ENCODE measurements at regions of chr1 and their contacts with region 1.

Region 1: DNA sequence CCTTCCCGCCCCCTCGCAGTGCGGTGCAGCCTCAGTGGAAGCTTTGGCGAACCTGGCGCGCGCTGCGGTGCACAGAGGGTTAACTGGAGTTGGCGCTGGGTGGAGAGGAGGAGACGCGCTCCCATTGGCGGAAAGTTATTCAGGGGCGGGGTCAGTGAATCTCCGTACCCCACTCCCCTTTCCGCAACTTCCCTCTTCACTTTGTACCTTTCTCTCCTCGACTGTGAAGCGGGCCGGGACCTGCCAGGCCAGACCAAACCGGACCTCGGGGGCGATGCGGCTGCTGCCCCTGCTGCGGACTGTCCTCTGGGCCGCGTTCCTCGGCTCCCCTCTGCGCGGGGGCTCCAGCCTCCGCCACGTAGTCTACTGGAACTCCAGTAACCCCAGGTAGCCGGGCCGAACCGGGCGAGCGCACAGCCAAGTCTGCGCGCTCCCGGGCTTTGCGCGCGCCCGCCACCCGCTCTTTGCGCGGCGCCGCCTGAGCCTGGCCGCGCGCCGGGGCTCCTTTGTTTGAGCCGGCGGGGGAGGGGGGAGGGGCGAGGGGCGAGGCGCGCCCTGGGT is at the start of gene EFNA4:
- DNase-seq: peak; percentile 49
- H3K4me3 ChIP-seq: peak within 1 kb of the TSS; percentile 46 to 93 (median 73)
- H3K27ac ChIP-seq: peak within 1 kb of the TSS; percentile 84 to 92 (median 91)
- H3K4me1 ChIP-seq: peaks cover 31 to 48% (median 33%) of the 10 kb centered on the region in 3 donors
- H3K27me3 ChIP-seq: no peaks in the 10 kb centered on the region
- CTCF ChIP-seq: no peak
- POLR2A ChIP-seq: peak in 2 of 4 donors; percentile 59 to 68
- total RNA-seq, gene EFNA4: 8.1 to 22.9 (median 12.2) TPM

Region 2: DNA sequence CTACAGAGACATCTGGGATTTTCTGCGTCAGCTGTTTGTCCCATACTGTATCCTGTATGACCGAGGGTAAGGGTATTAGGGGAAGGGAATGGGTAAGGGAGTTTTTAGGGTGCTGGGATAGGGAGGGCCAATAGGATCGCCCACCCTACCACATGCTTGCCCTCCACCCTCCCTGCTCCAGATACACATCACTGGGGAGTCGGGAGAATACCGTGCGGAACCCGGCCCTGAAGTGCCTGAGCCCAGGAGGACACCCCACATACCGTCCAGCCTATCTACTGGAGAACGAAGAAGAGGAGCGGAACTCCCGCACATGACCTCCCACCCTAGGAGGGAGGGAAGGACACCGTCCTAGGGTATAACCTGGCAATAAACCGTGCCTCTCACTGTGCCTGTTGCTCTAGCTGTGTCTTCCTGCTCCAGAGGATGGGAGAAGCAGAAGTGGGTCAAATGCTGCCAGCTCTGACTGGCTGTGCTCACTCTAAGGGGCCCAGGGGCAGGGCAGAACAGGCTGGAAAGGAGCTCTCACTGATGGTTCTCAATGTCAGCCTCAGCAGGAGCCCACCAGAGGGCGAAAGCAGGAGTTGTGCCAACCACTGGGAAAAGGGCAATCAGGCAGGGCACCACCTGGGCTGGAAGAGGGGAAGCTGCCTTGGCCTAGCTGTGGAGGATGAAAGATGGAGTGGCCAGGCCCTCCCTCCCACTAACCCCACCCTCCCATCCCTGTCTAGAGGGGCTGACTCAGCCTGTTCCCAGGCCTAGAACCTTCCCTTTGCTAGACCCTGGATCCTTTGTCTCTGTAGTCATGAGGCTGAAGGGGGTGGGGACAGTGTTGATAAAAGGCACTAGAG is 70.7 kb before region 1 on chr1:
- intact Hi-C with region 1: no loop called
- DNase-seq: no peak
- H3K4me3 ChIP-seq: no peak overlapping the region
- H3K27ac ChIP-seq: no peak overlapping the region
- H3K4me1 ChIP-seq: peaks cover 0 to 41% (median 3%) of the 10 kb centered on the region in 3 donors
- H3K27me3 ChIP-seq: no peaks in the 10 kb centered on the region
- CTCF ChIP-seq: no peak
- POLR2A ChIP-seq: no peak

Region 3: GRCh38 chr1:155084722-155085503 is 21.3 kb after region 1 on chr1:
- intact Hi-C with region 1: loop called (anchors 2 kb)
- DNase-seq: peak; percentile 69
- H3K4me3 ChIP-seq: peak overlapping the region; percentile 59 to 84 (median 70)
- H3K27ac ChIP-seq: peak overlapping the region; percentile 90 to 97 (median 96)
- H3K4me1 ChIP-seq: peaks cover 55 to 65% (median 56%) of the 10 kb centered on the region in 3 donors
- H3K27me3 ChIP-seq: peaks cover 0 to 46% (median 16%) of the 10 kb centered on the region in 4 donors
- CTCF ChIP-seq: peak; percentile 85 to 99 (median 98)
- POLR2A ChIP-seq: peak in 1 of 4 donors; percentile 40